GM13976 (cell line): ENCODE measurements at regions of chr1 and their contacts with region 1.

Region 1: GRCh38 chr1:223695941-223696340 is 16.4 kb upstream of the CAPN2 start:
- DNase-seq: no peak
- CTCF ChIP-seq: no peak

Region 2: DNA sequence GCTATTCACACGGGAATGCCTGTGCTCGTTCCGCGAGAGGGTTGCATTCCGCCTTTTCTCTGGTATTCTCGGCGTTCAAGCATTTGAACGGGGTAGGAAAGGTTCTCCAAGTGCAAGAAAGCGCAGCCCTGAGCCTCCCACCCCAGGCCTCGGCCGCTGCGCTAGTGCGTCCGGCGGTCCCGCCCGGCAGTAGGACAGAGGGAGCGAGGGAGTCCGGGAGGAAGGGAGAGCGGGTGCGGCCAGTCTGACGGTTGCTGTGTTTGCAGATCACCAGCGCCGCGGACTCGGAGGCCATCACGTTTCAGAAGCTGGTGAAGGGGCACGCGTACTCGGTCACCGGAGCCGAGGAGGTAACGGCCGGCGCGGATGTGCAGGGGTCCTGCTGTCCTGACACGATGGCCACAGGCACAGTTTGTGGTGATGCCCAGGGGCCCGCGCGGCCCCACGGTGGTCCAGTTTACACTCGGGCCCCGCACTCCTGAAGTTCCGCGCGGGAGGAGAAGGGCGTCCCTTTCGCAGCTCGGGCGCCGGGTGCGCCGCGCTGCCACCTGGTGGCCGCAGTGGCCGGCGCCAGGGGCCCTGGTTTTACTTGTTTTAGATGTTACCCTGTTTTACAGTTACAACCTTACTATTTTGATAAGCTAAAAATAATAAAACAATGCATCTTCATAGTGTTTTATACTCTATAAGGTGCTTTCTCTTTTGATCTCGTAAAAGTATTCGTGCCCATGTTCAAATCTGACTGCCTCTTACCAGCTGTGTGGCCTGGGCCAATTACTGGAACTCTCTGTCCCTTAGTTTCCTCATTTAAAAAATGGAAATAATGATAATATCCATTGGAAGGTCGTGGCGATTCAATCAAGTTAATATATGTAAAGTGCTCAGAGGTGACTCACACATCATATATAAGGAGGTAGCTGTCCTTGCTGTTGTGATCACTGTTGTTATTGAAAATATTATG is 53.1 kb after region 1 on chr1:
- in situ Hi-C with region 1: loop called (anchors 5 kb)
- DNase-seq: peak; percentile 84
- CTCF ChIP-seq: peak; percentile 90

Region 3: GRCh38 chr1:224113918-224114786 is 418.2 kb after region 1 on chr1 and contains the start of gene FBXO28:
- in situ Hi-C with region 1: no loop called
- DNase-seq: peak; percentile 94
- CTCF ChIP-seq: no peak